Transverse colon (tissue), 4 donors: ENCODE measurements at regions of chr18 and their contacts with region 1.

Region 1: GRCh38 chr18:73717573-73717972 is 430.1 kb downstream of the FBXO15 start:
- DNase-seq: no peak
- H3K4me3 ChIP-seq: no peak overlapping the region
- H3K27ac ChIP-seq: no peak overlapping the region
- H3K4me1 ChIP-seq: no peaks in the 10 kb centered on the region
- H3K27me3 ChIP-seq: no peaks in the 10 kb centered on the region
- CTCF ChIP-seq: no peak
- EP300 ChIP-seq: no peak
- POLR2A ChIP-seq: no peak

Region 2: DNA sequence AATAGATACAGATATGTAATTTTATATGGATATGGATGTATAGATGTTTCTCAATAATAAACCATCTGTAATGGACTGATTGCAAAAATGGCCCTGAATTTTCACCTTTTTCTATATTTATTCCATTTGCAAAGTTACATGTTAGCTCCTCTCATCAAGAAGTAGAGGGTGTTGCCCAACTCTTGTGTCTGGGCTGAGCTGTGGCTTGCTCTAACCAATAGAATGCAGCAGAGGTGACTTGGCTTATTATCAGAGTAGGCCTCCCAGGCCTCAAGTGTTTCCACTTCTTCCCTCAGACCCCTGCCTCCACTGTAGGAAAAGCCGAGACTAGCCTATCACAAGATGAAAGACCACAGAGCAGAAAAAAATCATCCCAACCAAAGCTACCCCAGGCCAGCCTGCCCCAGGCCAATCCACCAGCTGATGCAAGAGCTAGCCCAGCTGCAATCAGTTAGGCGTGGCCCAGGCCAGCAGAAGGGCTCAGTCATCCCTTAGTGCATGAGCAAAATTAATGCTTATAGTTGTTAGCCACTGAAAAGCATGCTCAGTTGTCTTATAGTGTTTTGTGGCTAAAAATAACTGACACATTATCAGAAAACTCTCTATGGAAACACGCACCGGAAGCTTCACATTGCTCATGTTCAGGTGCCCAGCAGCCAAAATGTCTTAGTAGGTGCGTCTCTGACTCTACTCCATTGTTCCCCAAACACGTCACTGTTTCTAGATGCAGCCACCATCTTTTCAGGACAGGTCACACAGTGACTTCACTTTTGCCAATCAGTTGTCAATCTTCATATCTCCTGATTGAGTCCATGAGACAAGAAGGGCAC is 33.9 kb before region 1 on chr18:
- in situ Hi-C with region 1: no loop called
- intact Hi-C with region 1: loop called (anchors 2 kb)
- DNase-seq: no peak
- H3K4me3 ChIP-seq: no peak overlapping the region
- H3K27ac ChIP-seq: no peak overlapping the region
- H3K4me1 ChIP-seq: no peaks in the 10 kb centered on the region
- H3K27me3 ChIP-seq: no peaks in the 10 kb centered on the region
- CTCF ChIP-seq: no peak
- EP300 ChIP-seq: no peak
- POLR2A ChIP-seq: no peak

Region 3: DNA sequence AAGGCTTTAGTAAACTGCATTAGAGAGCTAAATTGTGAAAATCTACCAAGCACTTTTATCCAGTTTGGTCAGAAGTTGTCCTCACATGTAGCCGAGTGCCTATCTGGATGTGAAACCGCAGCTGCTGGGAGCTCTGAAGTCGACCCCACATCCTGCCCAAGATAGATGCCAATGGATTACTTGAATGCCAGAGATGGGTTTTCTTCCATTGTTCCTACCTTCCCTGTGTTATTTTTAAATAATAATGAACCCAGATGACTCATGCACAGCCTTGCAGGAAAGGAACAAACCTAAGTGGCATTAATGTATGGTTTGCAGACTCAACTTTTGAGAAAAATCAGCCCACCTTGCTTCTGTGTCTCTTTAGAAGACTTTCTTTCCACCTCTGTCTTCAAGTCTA is 21.5 kb after region 1 on chr18:
- in situ Hi-C with region 1: no loop called
- intact Hi-C with region 1: loop called (anchors 1 kb)
- DNase-seq: no peak
- H3K4me3 ChIP-seq: no peak overlapping the region
- H3K27ac ChIP-seq: no peak overlapping the region
- H3K4me1 ChIP-seq: no peaks in the 10 kb centered on the region
- H3K27me3 ChIP-seq: no peaks in the 10 kb centered on the region
- CTCF ChIP-seq: no peak
- EP300 ChIP-seq: no peak
- POLR2A ChIP-seq: no peak